ENCODE measurements at regions of chr6 and their contacts with region 1.

Region 1: DNA sequence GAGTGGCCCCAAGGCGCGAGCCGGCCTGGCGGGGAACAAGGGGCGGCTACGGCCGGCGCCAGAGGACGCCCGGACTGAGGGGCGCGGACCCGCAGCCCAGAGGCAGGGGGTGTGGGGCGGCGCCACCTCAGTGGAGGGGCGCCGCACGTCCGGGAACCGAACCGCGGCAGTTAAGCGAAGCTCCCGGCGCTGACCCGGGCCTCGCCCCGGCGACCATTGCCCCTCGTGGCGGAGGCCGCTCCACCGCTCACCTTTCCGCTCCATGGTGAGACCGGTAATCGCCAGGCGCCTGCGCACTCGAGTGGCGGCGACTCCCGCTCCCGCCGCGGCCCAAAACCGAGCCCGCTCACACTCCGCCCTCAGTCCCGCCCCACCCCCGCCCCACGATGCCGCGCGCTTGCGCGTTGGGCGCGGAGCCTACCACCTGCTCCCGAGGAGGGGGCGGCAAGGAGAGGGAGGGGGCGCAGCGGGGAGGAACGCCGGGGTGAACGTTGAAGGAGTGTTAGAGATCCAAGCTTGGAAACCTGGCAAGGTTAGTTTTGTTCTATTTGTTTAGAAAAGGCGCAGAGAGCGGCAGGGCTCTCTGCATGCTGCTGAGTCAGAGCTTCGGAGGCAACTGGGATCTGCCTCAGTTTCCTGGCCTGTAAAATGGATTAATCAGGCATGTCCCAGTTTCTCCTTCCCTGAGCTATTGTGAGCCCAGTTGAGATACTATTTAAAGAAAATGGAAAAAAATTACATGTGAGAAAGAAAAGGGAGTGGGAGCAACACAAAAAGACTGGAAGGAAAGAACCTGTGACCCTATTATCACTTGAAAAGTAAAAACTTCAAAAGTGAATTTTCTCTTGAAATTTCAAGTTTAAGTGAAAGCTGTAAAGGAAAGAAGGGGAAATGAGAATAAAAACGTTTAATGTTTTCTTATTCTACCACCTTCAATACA is at the start of gene SRPK1:
- DNase-seq: peak; percentile 97
- H3K4me3 Mint-ChIP-seq: peak within 1 kb of the TSS; percentile 98
- H3K27ac Mint-ChIP-seq: peak within 1 kb of the TSS; percentile 98
- H3K4me1 Mint-ChIP-seq: peaks cover 44% of the 10 kb centered on the region
- H3K27me3 Mint-ChIP-seq: no peaks in the 10 kb centered on the region
- total RNA-seq, gene SRPK1: 162 and 163 TPM in 2 replicates

Region 2: GRCh38 chr6:35874730-35875129 is 46.3 kb before region 1 on chr6:
- intact Hi-C with region 1: loop called (anchors 5 kb)
- DNase-seq: no peak
- H3K4me3 Mint-ChIP-seq: no peak overlapping the region
- H3K27ac Mint-ChIP-seq: no peak overlapping the region
- H3K4me1 Mint-ChIP-seq: peaks cover 3% of the 10 kb centered on the region
- H3K27me3 Mint-ChIP-seq: no peaks in the 10 kb centered on the region

Region 3: GRCh38 chr6:36094753-36095496 is 173.9 kb after region 1 on chr6:
- intact Hi-C with region 1: loop called (anchors 10 kb)
- DNase-seq: peak; percentile 94
- H3K4me3 Mint-ChIP-seq: no peak overlapping the region
- H3K27ac Mint-ChIP-seq: no peak overlapping the region
- H3K4me1 Mint-ChIP-seq: peaks cover 21% of the 10 kb centered on the region
- H3K27me3 Mint-ChIP-seq: no peaks in the 10 kb centered on the region

Region 4: GRCh38 chr6:36235309-36235708 is 314.2 kb after region 1 on chr6:
- intact Hi-C with region 1: no loop called
- DNase-seq: no peak
- H3K4me3 Mint-ChIP-seq: no peak overlapping the region
- H3K27ac Mint-ChIP-seq: no peak overlapping the region
- H3K4me1 Mint-ChIP-seq: peaks cover 8% of the 10 kb centered on the region
- H3K27me3 Mint-ChIP-seq: peaks cover 5% of the 10 kb centered on the region